AG04450 (cell line): ENCODE measurements at regions of chr1 and their contacts with region 1.

Region 1: DNA sequence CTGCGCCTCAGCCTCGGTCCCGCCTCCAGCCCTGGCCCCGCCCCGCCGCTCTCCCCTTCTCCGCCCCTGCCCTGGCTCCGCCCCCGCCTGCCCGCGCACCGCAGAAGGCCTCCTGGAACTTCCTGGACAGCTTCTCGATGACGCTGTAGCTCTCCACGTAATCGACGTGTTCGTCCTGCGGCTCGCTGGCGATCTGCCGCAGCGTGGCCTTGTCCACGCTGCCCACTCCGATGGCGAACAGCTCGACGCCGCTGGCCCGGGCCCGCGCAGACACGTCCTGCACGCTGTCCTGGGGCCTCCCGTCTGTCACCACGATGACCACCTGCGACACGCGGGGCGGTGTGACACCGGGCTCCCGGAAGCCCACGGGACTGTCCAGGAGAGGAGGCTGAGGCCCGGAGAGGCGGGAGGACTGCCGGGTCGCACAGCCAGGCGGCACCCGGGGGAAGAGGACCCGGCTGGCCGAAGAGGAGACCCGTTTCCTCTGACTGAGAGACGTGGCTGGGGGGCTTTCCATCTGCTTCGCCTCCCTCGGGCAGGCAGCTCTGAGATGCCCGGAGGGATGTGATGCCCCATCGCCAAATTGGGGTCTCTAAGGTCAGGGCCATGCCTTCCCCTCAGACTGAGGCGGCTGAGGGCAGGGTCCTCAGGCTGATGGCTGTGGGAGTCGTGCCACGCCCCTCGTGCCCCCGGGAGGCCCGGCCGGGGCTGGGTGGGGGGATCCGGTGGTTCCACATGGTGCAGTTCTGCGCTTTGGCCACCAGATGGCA is 4.6 kb downstream of the MATN1 start:
- DNase-seq: peak; percentile 95
- H3K4me3 ChIP-seq: peak overlapping the region; percentile 66
- H3K27ac ChIP-seq: peak overlapping the region; percentile 99
- H3K27me3 ChIP-seq: no peaks in the 10 kb centered on the region
- CTCF ChIP-seq: peak; percentile 84

Region 2: GRCh38 chr1:30732277-30732996 is 13.6 kb after region 1 on chr1:
- CTCF ChIA-PET with region 1: interaction called, 31 read pairs
- POLR2A ChIA-PET with region 1: interaction called, 4 read pairs
- DNase-seq: no peak
- H3K4me3 ChIP-seq: no peak overlapping the region
- H3K27ac ChIP-seq: no peak overlapping the region
- H3K27me3 ChIP-seq: peaks cover 2% of the 10 kb centered on the region
- CTCF ChIP-seq: no peak

Region 3: DNA sequence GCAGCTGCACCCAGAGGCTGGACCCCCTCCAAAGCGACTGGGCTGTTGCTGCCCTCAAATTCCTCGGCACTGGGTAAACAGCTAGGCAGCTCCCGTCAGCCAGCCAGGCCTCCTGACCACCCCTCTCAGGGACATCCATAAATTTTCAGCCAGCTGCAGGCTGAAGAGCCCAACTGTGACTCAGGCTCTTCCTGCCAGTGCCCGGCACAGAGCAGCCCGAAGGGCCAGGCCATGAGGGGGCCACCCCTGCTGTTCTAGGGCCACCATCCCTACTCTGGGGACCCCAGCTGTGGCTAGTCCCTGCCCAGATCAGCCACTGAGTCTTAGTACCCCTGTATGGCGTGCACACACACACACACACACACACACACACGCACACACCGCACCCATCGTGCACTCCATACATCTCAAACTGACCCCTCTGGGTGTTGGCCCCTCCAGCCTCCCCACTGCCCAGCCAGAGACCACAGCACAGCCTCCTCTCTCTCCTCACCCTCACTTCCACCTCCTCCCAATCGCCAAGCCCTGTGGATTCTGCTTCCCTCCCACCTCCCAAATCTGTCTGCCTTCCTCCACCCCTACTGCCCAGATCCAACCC is 44.9 kb after region 1 on chr1:
- CTCF ChIA-PET with region 1: interaction called, 16 read pairs
- POLR2A ChIA-PET with region 1: no interaction called
- DNase-seq: no peak
- H3K4me3 ChIP-seq: no peak overlapping the region
- H3K27ac ChIP-seq: no peak overlapping the region
- H3K27me3 ChIP-seq: peaks cover 5% of the 10 kb centered on the region
- CTCF ChIP-seq: no peak

Region 4: GRCh38 chr1:30853350-30853749 is 134.5 kb after region 1 on chr1:
- CTCF ChIA-PET with region 1: no interaction called
- POLR2A ChIA-PET with region 1: no interaction called
- DNase-seq: no peak
- H3K4me3 ChIP-seq: no peak overlapping the region
- H3K27ac ChIP-seq: peak overlapping the region; percentile 11
- H3K27me3 ChIP-seq: peaks cover 3% of the 10 kb centered on the region
- CTCF ChIP-seq: no peak